CD4-positive, alpha-beta T cell (primary cell): ENCODE measurements at regions of chr1 and their contacts with region 1.

Region 1: GRCh38 chr1:47313915-47314664 is at the start of gene STIL:
- DNase-seq: peak; percentile 91 to 99 (median 94)
- ATAC-seq: peak; percentile 94
- H3K4me3 ChIP-seq: peak within 1 kb of the TSS; percentile 84
- H3K4me3 Mint-ChIP-seq: peak within 1 kb of the TSS; percentile 93
- H3K27ac ChIP-seq: peak within 1 kb of the TSS; percentile 46 to 86
- H3K27ac Mint-ChIP-seq: peak within 1 kb of the TSS; percentile 91
- H3K4me1 ChIP-seq: peaks cover 11% of the 10 kb centered on the region
- H3K4me1 Mint-ChIP-seq: peaks cover 19% of the 10 kb centered on the region
- H3K27me3 ChIP-seq: no peaks in the 10 kb centered on the region
- H3K27me3 Mint-ChIP-seq: no peaks in the 10 kb centered on the region
- CTCF ChIP-seq: no peak
- total RNA-seq, gene STIL: 1.7 to 2.1 TPM

Region 2: GRCh38 chr1:47333922-47334764 is 20.1 kb after region 1 on chr1:
- CTCF ChIA-PET with region 1: interaction called, 14 read pairs
- POLR2A ChIA-PET with region 1: interaction called, 53 read pairs
- intact Hi-C with region 1: loop called (anchors 1 kb)
- DNase-seq: peak; percentile 44 to 89 (median 59)
- ATAC-seq: peak; percentile 88
- H3K4me3 ChIP-seq: peak overlapping the region; percentile 82
- H3K4me3 Mint-ChIP-seq: peak overlapping the region; percentile 96
- H3K27ac ChIP-seq: peak overlapping the region; percentile 80 to 84
- H3K27ac Mint-ChIP-seq: peak overlapping the region; percentile 90
- H3K4me1 ChIP-seq: peaks cover 34% of the 10 kb centered on the region
- H3K4me1 Mint-ChIP-seq: peaks cover 21% of the 10 kb centered on the region
- H3K27me3 ChIP-seq: no peaks in the 10 kb centered on the region
- H3K27me3 Mint-ChIP-seq: no peaks in the 10 kb centered on the region
- CTCF ChIP-seq: no peak